ENCODE measurements at regions of chr14 and their contacts with region 1.

Region 1: DNA sequence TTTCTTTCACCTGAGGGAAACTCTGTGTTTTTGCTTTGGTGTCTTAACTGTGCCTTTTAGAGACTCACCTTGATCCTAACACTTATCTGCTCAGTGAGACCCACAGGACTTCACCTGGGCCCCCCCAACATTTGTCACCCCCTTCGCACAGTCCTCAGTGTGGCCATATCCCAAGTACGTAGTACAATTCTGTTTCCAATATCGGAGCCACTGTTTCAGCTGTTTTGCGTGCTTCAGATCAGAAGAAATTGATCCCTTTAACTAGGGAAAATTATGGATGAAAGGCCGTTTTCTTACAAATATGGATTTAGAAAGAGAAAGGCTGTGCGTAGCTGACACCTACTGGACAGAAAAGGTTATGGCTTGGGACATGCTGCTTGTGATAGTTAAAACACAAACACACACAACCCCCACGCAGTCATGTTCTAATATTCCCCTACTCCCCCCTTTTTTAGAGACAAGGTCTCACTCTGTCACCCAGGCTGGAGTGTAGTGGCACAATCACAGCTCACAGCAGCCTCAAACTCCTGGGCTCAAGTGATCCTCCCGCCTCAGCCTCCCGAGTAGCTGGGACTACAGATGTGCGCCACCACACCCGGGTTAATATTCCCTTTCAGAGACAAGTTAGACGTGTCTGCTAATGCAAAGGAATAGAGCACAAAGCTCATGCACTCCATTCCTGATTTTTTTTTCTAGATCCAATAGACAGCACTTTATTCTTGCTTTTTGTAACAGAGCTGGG is 3.6 kb upstream of the SLC7A8 start:
- DNase-seq: peak in 1 of 2 donors; percentile 30
- ATAC-seq: peak in 1 of 2 donors; percentile 71
- H3K4me3 ChIP-seq: no peak overlapping the region
- H3K27ac ChIP-seq: no peak overlapping the region
- H3K4me1 ChIP-seq: peaks cover 0 to 5% of the 10 kb centered on the region in 2 donors
- H3K27me3 ChIP-seq: peaks cover 0 to 5% (median 0%) of the 10 kb centered on the region in 3 donors
- CTCF ChIP-seq: peak; percentile 80 to 97 (median 83)
- POLR2A ChIP-seq: no peak

Region 2: GRCh38 chr14:22986508-22987054 is 200.5 kb before region 1 on chr14:
- in situ Hi-C with region 1: no loop called
- intact Hi-C with region 1: loop called (anchors 10 kb)
- DNase-seq: peak; percentile 76 to 80
- ATAC-seq: peak; percentile 83 to 84
- H3K4me3 ChIP-seq: no peak overlapping the region
- H3K27ac ChIP-seq: no peak overlapping the region
- H3K4me1 ChIP-seq: peaks cover 3 to 20% of the 10 kb centered on the region in 2 donors
- H3K27me3 ChIP-seq: peaks cover 9 to 18% (median 17%) of the 10 kb centered on the region in 3 donors
- CTCF ChIP-seq: peak; percentile 76 to 94 (median 84)
- POLR2A ChIP-seq: no peak

Region 3: DNA sequence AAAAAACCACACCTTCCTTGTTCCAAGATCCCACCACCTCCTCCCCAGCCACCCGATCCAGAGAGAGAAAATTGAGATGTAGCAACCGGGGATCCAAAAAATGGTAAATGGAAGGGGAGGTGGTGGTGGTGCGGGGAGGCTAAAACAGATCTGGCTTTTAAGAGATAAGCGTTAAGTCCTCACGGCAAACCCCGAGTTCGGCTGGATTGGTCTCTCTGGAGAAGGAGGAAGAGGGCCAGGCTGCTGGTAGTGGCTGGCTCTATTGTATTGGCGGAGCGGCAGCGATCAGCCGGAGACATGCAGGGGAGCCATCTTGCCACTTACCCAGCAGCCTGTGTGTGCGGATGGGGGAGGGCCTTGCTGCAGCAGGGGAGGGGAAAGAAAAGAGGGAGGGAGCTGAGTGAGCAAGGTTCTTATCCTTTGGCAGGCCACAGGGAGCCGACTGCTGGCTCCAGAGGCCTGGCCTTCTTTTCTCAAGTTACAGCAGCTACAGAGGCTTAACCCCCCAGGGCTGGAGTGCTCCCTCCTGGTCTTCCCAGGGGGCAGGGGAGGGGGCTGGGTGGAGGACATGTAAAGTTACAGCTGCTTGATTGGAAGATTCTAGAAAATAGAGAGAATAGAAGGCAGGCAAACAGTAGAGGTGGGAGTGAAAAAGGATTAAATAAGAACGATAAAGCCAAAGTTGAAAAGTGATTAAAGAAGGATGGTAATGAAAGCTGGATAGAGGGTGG is 115.7 kb before region 1 on chr14:
- in situ Hi-C with region 1: no loop called
- intact Hi-C with region 1: loop called (anchors 5 kb)
- DNase-seq: peak; percentile 84 to 90
- ATAC-seq: peak; percentile 92 to 93
- H3K4me3 ChIP-seq: peak overlapping the region; percentile 68 to 81 (median 74)
- H3K27ac ChIP-seq: peak overlapping the region; percentile 88 to 95 (median 90)
- H3K4me1 ChIP-seq: peaks cover 25 to 32% of the 10 kb centered on the region in 2 donors
- H3K27me3 ChIP-seq: no peaks in the 10 kb centered on the region
- CTCF ChIP-seq: no peak
- POLR2A ChIP-seq: peak; percentile 63 to 67

Region 4: GRCh38 chr14:23114669-23115491 is 72.2 kb before region 1 on chr14:
- in situ Hi-C with region 1: loop called (anchors 5 kb)
- intact Hi-C with region 1: loop called (anchors 1 kb)
- DNase-seq: no peak
- ATAC-seq: peak in 1 of 2 donors; percentile 24
- H3K4me3 ChIP-seq: no peak overlapping the region
- H3K27ac ChIP-seq: no peak overlapping the region
- H3K4me1 ChIP-seq: no peaks in the 10 kb centered on the region
- H3K27me3 ChIP-seq: peaks cover 0 to 3% (median 0%) of the 10 kb centered on the region in 3 donors
- CTCF ChIP-seq: no peak
- POLR2A ChIP-seq: no peak

Region 5: DNA sequence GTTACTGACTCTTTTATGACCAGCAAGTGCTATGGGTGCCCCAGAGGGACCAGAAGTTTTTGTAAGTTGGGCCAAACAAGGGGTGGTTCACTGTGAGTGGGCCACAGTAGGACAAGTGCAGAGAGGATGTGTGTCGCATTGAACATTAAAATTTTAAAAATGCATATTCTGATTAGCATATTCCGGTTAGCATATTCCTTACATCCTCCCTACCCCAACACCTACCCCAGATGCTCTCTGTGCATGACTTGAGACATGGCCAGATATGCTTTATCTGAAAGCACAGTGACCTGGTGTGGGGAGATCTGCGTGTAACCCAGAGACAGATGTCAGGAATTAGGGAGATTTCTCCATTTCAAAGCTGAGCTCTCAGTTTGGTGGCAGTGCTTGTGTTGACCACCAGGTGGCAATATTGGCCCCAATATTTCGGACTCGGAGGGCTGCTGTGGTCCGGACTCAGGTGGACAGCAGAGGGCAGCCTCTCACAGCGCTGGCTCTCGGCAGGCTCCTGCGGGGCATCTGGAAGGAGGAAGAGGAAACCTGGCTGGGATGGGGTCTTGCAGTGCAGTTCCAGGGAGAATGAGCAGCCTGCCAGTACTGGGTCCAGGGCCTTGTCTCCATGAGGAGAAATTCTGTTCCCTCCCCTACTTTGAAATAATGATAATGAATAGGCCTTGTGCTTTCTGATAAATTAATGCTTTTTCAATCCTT is 66.4 kb before region 1 on chr14:
- in situ Hi-C with region 1: loop called (anchors 5 kb)
- intact Hi-C with region 1: loop called (anchors 1 kb)
- DNase-seq: peak; percentile 81 to 88
- ATAC-seq: peak; percentile 51 to 70
- H3K4me3 ChIP-seq: no peak overlapping the region
- H3K27ac ChIP-seq: peak overlapping the region; percentile 56 to 85 (median 76)
- H3K4me1 ChIP-seq: peaks cover 22 to 29% of the 10 kb centered on the region in 2 donors
- H3K27me3 ChIP-seq: peaks cover 0 to 3% (median 0%) of the 10 kb centered on the region in 3 donors
- CTCF ChIP-seq: peak; percentile 100
- POLR2A ChIP-seq: no peak

Region 6: GRCh38 chr14:23154964-23155587 is 32.0 kb before region 1 on chr14:
- in situ Hi-C with region 1: no loop called
- intact Hi-C with region 1: loop called (anchors 2 kb)
- DNase-seq: peak; percentile 93 to 98
- ATAC-seq: peak; percentile 72 to 75
- H3K4me3 ChIP-seq: peak overlapping the region; percentile 30 to 55 (median 46)
- H3K27ac ChIP-seq: peak overlapping the region; percentile 90 to 97 (median 96)
- H3K4me1 ChIP-seq: peaks cover 45 to 60% of the 10 kb centered on the region in 2 donors
- H3K27me3 ChIP-seq: no peaks in the 10 kb centered on the region
- CTCF ChIP-seq: no peak
- POLR2A ChIP-seq: peak; percentile 70 to 79

Region 7: DNA sequence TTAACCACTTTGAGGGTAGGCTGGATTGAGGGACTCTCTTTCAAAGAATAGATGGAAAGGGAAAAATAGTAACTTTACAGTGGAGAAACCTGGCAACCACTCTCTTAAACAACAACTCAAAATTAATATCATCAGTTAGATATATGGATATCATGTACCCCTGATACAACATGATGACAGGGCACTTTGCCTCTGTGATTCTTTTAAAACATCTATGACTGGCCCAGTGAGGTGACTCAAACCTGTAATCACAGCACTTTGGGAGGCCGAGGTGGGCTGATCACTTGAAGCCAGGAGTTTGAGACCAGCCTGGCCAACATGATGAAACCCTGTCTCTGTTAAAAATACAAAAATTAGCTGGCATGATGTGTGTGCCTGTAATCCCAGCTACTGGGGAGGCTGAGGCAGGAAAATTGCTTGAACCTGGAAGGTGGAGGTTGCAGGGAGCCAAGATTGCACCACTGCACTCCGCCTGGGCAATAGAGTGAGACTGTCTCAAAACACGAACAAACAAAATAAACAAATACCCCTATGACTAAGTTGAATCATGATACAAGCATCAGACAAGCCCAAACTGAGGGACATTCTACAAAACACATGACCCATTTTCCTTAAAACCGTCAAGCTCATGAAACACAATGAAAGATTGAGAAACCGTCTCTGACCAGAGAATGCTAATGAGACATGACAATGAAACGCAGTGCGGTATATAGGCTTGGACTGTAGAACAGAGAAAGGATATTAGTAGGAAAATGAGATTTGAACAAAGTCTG is 22.8 kb after region 1 on chr14:
- in situ Hi-C with region 1: no loop called
- intact Hi-C with region 1: no loop called
- DNase-seq: no peak
- ATAC-seq: no peak
- H3K4me3 ChIP-seq: no peak overlapping the region
- H3K27ac ChIP-seq: no peak overlapping the region
- H3K4me1 ChIP-seq: no peaks in the 10 kb centered on the region
- H3K27me3 ChIP-seq: no peaks in the 10 kb centered on the region
- CTCF ChIP-seq: no peak
- POLR2A ChIP-seq: no peak

Region 8: DNA sequence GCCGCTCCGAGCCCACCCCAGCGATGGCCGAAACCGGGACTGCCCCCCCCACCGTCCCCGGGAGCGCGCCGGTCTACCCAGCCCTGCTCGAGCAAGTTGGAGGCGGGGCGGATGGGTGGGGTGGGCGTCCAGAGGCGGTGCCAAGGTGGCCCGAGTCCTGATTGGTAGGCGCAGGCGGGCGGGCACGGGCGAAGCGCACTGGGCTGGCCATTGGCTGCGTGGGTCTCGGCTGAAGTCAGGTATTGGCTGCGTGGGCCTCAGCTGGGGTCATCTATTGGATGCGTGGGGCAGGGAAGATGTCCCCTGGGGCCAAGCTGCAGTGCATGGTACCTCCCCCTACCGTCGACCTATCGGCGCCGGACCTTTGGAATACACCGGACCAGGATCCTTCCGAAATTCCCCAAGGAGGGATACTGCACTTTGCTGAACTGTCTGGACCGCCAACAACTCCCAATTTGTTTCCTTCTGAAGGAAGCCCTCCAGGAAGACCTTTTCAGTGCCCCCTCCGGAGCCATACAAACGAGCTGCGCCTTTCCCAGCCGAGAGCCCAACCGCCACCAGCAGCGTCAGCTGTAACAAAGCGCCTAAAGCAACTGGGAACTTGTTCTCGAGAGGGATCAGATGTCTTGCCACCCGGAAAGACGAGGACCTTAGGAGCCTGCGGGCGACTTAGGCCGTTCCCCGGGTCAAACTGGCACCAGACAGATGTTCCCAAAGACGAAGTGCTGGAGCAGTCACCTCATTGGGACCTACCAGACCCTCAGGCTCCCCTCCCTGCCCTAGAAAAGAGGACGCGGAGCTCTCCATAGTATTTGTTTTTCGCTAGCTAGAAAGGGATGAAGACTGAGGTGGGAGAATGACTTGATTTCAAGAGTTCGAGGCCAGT is 99.2 kb after region 1 on chr14 and contains the start of gene HOMEZ:
- in situ Hi-C with region 1: no loop called
- intact Hi-C with region 1: loop called (anchors 5 kb)
- DNase-seq: peak; percentile 100
- ATAC-seq: peak; percentile 93 to 95
- H3K4me3 ChIP-seq: peak within 1 kb of the TSS; percentile 84 to 99 (median 94)
- H3K27ac ChIP-seq: peak within 1 kb of the TSS; percentile 98 to 100 (median 100)
- H3K4me1 ChIP-seq: peaks cover 20 to 25% of the 10 kb centered on the region in 2 donors
- H3K27me3 ChIP-seq: no peaks in the 10 kb centered on the region
- CTCF ChIP-seq: peak in 3 of 5 experiments; percentile 11 to 23 (median 21)
- POLR2A ChIP-seq: peak; percentile 88 to 91
- total RNA-seq, gene HOMEZ: 7.8 to 10.0 (median 8.4) TPM

Region 9: GRCh38 chr14:23301288-23301968 is 114.3 kb after region 1 on chr14:
- in situ Hi-C with region 1: no loop called
- intact Hi-C with region 1: no loop called
- DNase-seq: peak; percentile 97 to 98
- ATAC-seq: peak; percentile 73 to 78
- H3K4me3 ChIP-seq: peak overlapping the region; percentile 72 to 87 (median 82)
- H3K27ac ChIP-seq: peak overlapping the region; percentile 96 to 99 (median 98)
- H3K4me1 ChIP-seq: peaks cover 30 to 32% of the 10 kb centered on the region in 2 donors
- H3K27me3 ChIP-seq: no peaks in the 10 kb centered on the region
- CTCF ChIP-seq: peak; percentile 60 to 94 (median 79)
- POLR2A ChIP-seq: peak; percentile 84 to 88

Measured in gastrocnemius medialis (tissue), 4 donors.